Activated naive CD4-positive, alpha-beta T cell treated with anti-CD3 and anti-CD28 coated beads for 36 hours (primary cell): ENCODE measurements at regions of chr13 and their contacts with region 1.

Region 1: DNA sequence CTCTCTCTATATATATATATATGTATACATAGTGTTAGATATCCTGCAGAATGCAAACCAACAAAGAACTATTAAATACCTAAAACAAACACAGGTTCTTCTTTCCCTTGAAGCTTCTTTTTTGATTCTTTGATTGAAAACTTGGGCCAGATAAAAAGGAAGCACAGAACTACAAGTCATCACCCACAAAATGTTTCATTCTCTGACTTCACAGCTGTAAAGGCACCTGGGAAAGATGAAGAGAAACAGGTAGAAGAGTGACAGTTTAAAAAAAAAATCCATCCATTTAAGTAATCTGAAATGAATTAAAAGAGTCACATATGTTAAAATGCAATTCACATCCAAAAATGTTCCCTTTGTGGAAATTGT is 90.7 kb upstream of the FNDC3A start:
- DNase-seq: no peak
- H3K4me3 Mint-ChIP-seq: no peak overlapping the region
- H3K27ac Mint-ChIP-seq: peak overlapping the region; percentile 79
- H3K4me1 Mint-ChIP-seq: peaks cover 51% of the 10 kb centered on the region
- H3K27me3 Mint-ChIP-seq: peaks cover 2% of the 10 kb centered on the region

Region 2: DNA sequence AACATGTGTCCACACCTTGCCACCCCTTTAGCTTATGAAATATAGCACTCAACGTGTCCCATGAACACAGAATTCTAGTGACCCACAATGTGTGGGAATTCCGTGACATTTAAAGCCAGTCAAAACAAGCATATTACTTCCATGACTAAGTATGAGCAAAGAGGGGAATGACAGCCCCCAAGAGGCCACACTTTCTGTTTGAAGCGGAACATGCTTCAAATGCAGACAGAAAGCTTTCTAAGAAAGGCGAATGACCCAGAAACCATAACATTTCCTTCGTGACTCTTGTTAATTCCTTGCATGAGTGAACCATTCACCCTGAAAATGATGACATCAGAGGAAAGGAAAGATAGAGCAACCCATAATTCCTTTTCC is 31.3 kb before region 1 on chr13:
- CTCF ChIA-PET with region 1: interaction called, 4 read pairs
- intact Hi-C with region 1: loop called (anchors 2 kb)
- DNase-seq: peak; percentile 40
- H3K4me3 Mint-ChIP-seq: no peak overlapping the region
- H3K27ac Mint-ChIP-seq: no peak overlapping the region
- H3K4me1 Mint-ChIP-seq: peaks cover 45% of the 10 kb centered on the region
- H3K27me3 Mint-ChIP-seq: no peaks in the 10 kb centered on the region

Region 3: DNA sequence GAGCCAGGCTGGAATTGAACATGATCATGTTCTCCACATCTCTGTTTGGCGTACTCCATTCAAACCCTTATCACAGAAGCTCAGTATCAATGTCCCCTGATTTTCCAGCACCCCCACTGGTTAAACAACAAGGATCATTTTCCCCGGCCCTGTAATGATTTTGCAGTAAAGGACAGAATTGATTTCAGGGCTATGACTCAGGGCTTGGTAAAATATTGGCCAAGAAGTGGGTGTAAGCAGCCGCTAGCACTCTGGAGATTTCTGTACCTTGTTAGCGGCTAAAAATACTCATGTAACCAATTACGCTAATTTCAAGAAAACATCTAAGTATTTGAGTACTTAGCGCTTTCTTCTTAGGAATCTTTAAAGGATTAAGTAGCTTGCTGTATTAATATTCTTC is 21.2 kb after region 1 on chr13:
- CTCF ChIA-PET with region 1: no interaction called
- intact Hi-C with region 1: no loop called
- DNase-seq: no peak
- H3K4me3 Mint-ChIP-seq: no peak overlapping the region
- H3K27ac Mint-ChIP-seq: no peak overlapping the region
- H3K4me1 Mint-ChIP-seq: peaks cover 4% of the 10 kb centered on the region
- H3K27me3 Mint-ChIP-seq: peaks cover 9% of the 10 kb centered on the region

Region 4: DNA sequence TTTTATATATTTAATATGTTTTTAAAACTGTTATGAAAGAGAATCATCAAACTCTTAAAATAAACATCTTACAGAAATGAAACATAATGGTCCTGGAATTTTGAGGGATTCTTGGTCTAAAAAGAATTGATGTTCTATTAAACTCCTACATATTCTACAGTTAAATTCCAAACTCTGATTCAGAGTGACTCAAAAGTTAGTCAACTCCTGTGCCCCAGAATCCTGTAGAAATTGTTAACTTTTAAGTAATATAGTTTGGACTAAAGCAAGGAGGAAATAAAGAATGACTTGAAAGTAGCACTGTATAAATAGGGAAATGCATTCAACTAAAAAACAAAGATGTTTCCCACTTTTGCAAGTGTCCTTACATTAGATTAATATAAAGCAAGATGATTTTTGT is 138.4 kb after region 1 on chr13:
- CTCF ChIA-PET with region 1: no interaction called
- intact Hi-C with region 1: loop called (anchors 2 kb)
- DNase-seq: no peak
- H3K4me3 Mint-ChIP-seq: no peak overlapping the region
- H3K27ac Mint-ChIP-seq: no peak overlapping the region
- H3K4me1 Mint-ChIP-seq: peaks cover 30% of the 10 kb centered on the region
- H3K27me3 Mint-ChIP-seq: no peaks in the 10 kb centered on the region